ENCODE measurements at regions of chr10 and their contacts with region 1.

Region 1: GRCh38 chr10:63521416-63522276 is 445 bp downstream of the REEP3 start:
- DNase-seq: peak; percentile 51
- H3K4me3 ChIP-seq: peak overlapping the region; percentile 73 to 76
- H3K27ac ChIP-seq: peak overlapping the region; percentile 98
- H3K4me1 ChIP-seq: peaks cover 8% of the 10 kb centered on the region
- H3K27me3 ChIP-seq: no peaks in the 10 kb centered on the region
- CTCF ChIP-seq: no peak
- POLR2A ChIP-seq: peak; percentile 14

Region 2: DNA sequence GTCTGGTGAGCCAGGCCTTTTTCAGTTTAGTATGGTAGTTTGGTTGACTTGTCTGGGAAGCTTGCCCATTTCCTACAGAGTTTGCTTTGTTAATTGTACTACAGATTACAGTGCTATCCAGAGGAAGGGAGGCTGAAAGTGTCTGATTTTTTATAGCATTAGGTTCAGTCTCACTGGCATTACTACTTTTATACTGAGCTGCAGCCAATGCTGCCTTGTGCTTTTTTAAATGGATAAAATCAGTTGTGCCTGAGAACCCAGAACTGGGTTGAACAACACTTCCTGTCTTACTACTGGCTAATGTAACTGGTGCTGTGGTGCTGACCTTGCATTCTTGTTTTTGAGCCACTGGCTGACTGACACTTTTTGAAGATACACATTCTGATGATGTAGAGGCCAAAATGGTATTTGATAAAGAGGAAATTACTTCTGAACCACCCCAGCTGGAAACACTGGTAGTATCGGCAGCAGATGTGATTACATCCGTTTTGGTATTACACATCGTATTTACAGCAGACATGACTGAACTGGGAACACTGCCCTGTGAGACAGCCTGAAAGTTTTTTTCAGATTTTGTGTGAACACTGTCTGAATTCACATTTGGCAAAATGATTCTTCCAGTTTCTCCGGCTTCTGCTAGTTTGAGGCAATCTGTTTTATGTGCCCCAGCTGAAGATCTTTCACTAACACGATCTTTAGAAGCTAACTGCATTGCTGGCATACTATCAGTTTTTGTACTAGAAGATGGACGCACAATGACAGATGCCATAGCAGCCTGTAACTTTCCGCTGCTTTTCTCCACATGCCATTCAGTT is 314.4 kb before region 1 on chr10:
- intact Hi-C with region 1: loop called (anchors 10 kb)
- DNase-seq: peak; percentile 35
- H3K4me3 ChIP-seq: no peak overlapping the region
- H3K27ac ChIP-seq: peak overlapping the region; percentile 58 to 66
- H3K4me1 ChIP-seq: peaks cover 18% of the 10 kb centered on the region
- H3K27me3 ChIP-seq: no peaks in the 10 kb centered on the region
- CTCF ChIP-seq: no peak
- POLR2A ChIP-seq: no peak

Region 3: DNA sequence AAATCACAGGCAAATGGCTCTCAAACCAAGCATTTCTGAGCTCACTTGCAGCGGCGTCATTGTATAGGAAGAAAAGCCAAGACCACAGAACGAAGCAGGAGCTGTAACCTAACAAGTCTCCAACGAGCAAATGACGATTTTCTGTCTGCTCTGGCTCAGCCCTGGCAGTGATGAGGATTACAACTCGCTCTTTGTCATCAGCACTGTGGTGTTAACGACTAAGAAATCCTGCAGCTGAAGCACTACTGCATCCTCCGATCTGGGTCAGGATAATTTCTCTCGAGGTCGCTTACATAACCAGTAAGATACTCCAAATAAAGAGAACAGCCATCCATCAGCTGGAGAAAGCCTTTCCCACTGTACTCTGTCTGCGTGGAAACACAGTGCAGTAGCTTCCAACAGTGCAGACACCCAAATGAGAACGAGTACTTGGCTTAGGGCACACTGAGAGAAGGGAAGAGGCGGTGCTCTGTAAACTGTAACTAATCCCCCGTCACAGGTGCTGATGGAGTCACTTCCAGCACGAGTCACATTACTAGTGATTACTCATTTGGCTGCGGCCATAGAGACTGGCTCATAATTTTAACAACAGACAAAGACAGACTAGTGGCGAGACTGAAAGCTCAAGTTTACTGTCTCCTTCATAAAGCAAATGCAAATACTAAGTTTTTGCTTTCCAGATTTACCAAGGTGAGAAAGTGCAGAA is 252.7 kb before region 1 on chr10:
- intact Hi-C with region 1: loop called (anchors 10 kb)
- DNase-seq: peak; percentile 92
- H3K4me3 ChIP-seq: peak overlapping the region; percentile 37 to 39
- H3K27ac ChIP-seq: peak overlapping the region; percentile 90
- H3K4me1 ChIP-seq: no peaks in the 10 kb centered on the region
- H3K27me3 ChIP-seq: no peaks in the 10 kb centered on the region
- CTCF ChIP-seq: peak in 3 of 4 experiments; percentile 17 to 74 (median 64)
- POLR2A ChIP-seq: peak; percentile 99